Activated CD8-positive, alpha-beta T cell treated with anti-CD3 and anti-CD28 coated beads, Interleukin-2, amount 10 ng/mL, durations not matched to agents 7 days and 5 days (primary cell): ENCODE measurements at regions of chr19 and their contacts with region 1.

Region 1: GRCh38 chr19:14031719-14032480 is at the start of gene IL27RA:
- DNase-seq: peak; percentile 88
- ATAC-seq: peak; percentile 81
- H3K4me3 Mint-ChIP-seq: peak within 1 kb of the TSS; percentile 94
- H3K27ac Mint-ChIP-seq: peak within 1 kb of the TSS; percentile 96
- H3K4me1 Mint-ChIP-seq: peaks cover 20% of the 10 kb centered on the region
- H3K27me3 Mint-ChIP-seq: peaks cover 2% of the 10 kb centered on the region
- total RNA-seq, gene IL27RA: 39.7 to 39.8 TPM

Region 2: GRCh38 chr19:13952154-13953035 is 79.5 kb before region 1 on chr19 and contains the start of gene DCAF15:
- CTCF ChIA-PET with region 1: interaction called, 6 read pairs
- POLR2A ChIA-PET with region 1: interaction called, 19 read pairs
- DNase-seq: peak; percentile 100
- ATAC-seq: peak; percentile 99
- H3K4me3 Mint-ChIP-seq: peak within 1 kb of the TSS; percentile 97
- H3K27ac Mint-ChIP-seq: peak within 1 kb of the TSS; percentile 93
- H3K4me1 Mint-ChIP-seq: peaks cover 21% of the 10 kb centered on the region
- H3K27me3 Mint-ChIP-seq: no peaks in the 10 kb centered on the region
- total RNA-seq, gene DCAF15: 90.1 to 104 TPM

Region 3: DNA sequence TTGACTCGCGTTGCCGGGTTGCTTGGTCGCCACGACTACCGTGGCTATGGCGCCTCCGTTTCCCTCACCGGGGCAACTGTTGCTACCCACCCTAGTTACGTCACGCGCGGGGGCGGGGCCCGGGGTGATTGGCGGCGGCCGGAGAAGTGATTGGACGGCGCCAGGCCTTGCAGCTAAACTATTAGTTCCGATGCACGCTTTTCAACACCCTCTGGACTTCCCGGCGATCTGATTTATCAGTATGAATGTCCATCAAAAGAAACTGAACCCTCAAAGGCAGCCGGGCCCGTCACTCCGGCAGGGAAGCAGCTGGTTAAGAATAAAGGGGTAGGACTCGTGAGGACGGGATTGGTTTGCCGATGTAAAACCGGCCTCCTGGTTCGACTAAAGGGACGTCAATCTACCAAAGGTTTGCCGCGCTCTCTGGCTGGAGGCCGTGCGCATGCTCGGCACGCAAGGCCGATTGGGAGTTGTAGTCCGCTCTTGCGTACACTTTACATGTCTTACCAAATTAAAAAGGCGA is 25.6 kb before region 1 on chr19 and contains the start of gene RFX1:
- CTCF ChIA-PET with region 1: interaction called, 8 read pairs
- POLR2A ChIA-PET with region 1: interaction called, 49 read pairs
- DNase-seq: peak; percentile 100
- ATAC-seq: peak; percentile 80
- H3K4me3 Mint-ChIP-seq: peak within 1 kb of the TSS; percentile 88
- H3K27ac Mint-ChIP-seq: peak within 1 kb of the TSS; percentile 98
- H3K4me1 Mint-ChIP-seq: peaks cover 43% of the 10 kb centered on the region
- H3K27me3 Mint-ChIP-seq: no peaks in the 10 kb centered on the region
- total RNA-seq, gene RFX1: 15.9 to 17.7 TPM

Region 4: GRCh38 chr19:14048443-14049153 is 16.7 kb after region 1 on chr19:
- CTCF ChIA-PET with region 1: interaction called, 23 read pairs
- POLR2A ChIA-PET with region 1: interaction called, 6 read pairs
- DNase-seq: peak; percentile 78
- ATAC-seq: peak; percentile 71
- H3K4me3 Mint-ChIP-seq: no peak overlapping the region
- H3K27ac Mint-ChIP-seq: no peak overlapping the region
- H3K4me1 Mint-ChIP-seq: peaks cover 7% of the 10 kb centered on the region
- H3K27me3 Mint-ChIP-seq: no peaks in the 10 kb centered on the region

Region 5: DNA sequence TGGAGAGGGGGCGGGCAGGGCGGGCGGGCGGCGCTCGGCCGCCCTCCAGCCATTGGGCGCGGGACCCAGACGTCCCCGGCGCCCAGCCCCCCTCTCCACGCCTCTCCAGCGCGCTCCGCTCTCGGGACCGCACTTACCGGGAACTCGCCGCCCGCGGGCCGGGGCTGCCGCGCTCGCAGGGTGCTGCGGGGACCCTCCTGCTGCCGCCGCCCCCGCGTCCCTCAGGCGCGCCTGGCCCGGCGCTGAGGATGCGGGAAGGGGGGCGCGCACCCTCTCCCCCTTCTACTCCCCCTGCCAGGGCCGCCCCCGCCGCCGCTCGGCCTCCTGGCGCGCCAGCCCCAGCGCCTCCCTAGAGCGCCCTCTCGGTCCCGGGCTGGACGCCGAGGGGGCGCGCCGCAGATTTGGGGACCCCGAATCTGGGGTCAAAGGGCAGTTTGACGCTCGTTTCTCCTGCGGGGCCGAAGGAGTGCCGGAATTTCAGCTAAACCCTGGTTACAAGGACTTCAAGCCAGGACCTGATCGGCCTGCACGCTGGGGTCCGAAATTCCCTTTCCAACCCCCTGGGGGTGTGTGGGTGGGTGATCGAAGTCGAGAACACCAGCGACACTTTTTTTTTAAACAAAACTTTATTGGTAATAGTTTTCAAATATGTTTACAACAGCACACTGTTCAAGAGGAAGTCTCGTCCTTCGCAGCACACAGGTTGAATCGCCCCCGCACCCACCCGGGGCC is 59.3 kb after region 1 on chr19:
- CTCF ChIA-PET with region 1: no interaction called
- POLR2A ChIA-PET with region 1: no interaction called
- DNase-seq: peak; percentile 65
- ATAC-seq: peak; percentile 78
- H3K4me3 Mint-ChIP-seq: peak overlapping the region; percentile 93
- H3K27ac Mint-ChIP-seq: peak overlapping the region; percentile 96
- H3K4me1 Mint-ChIP-seq: peaks cover 24% of the 10 kb centered on the region
- H3K27me3 Mint-ChIP-seq: no peaks in the 10 kb centered on the region